ENCODE measurements at regions of chr22 and their contacts with region 1.

Region 1: GRCh38 chr22:36339171-36340065 is 48.3 kb downstream of the MYH9 start:
- DNase-seq: peak; percentile 52
- H3K4me3 ChIP-seq: no peak overlapping the region
- H3K27ac ChIP-seq: peak overlapping the region; percentile 47
- H3K4me1 ChIP-seq: peaks cover 95% of the 10 kb centered on the region
- H3K27me3 ChIP-seq: no peaks in the 10 kb centered on the region
- CTCF ChIP-seq: no peak
- POLR2A ChIP-seq: no peak

Region 2: GRCh38 chr22:36211237-36211861 is 128.1 kb before region 1 on chr22:
- CTCF ChIA-PET with region 1: no interaction called
- POLR2A ChIA-PET with region 1: no interaction called
- dilution Hi-C with region 1: no loop called
- intact Hi-C with region 1: no loop called
- DNase-seq: peak; percentile 42
- H3K4me3 ChIP-seq: no peak overlapping the region
- H3K27ac ChIP-seq: no peak overlapping the region
- H3K4me1 ChIP-seq: no peaks in the 10 kb centered on the region
- H3K27me3 ChIP-seq: peaks cover 31 to 41% of the 10 kb centered on the region in 2 experiments
- CTCF ChIP-seq: no peak
- POLR2A ChIP-seq: no peak

Region 3: DNA sequence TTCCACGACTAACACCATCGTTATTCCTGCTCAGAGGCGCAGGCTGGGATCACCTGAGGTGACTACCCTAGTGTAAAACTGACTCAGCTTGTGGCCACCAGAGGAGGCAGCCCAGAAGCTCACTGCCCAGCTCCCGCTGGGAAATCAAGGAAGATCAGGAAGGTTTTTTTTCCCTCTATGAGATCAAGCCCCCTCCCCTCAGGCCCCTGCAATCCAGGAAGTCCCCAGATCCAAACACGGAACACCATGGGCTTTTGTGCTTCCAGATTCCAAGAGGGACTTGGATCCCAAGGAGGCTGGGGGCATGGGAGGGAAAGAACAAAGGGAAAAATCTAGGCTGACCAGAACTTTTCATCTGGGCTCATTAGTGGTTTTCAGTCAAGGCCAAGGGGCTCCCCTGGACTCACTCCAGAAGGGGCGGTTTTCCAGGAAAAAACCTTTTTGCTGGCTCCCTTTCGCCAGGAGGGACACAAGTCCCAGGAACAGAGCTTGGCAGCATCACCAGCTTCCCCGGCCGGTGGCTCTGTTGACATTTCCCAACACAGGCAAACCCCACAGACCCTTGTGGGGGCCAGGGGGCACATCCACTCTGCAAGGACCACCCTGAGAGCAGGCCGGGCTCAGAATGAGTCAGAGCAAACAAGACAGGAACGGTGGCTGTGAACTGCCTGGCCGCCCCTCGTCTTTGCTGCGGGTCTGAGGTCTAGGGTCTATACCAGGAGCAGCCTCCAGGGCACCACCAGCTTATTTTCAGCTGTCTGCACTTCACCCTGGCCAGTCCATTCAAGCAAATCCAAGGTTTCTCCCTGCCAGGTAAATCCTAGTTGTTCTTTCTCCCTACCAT is 11.6 kb after region 1 on chr22:
- CTCF ChIA-PET with region 1: interaction called, 14 read pairs
- POLR2A ChIA-PET with region 1: interaction called, 5 read pairs
- dilution Hi-C with region 1: no loop called
- intact Hi-C with region 1: loop called (anchors 1 kb)
- DNase-seq: peak; percentile 56
- H3K4me3 ChIP-seq: no peak overlapping the region
- H3K27ac ChIP-seq: peak overlapping the region; percentile 60
- H3K4me1 ChIP-seq: peaks cover 86% of the 10 kb centered on the region
- H3K27me3 ChIP-seq: no peaks in the 10 kb centered on the region
- CTCF ChIP-seq: no peak
- POLR2A ChIP-seq: no peak

Region 4: GRCh38 chr22:36359181-36359996 is 20.0 kb after region 1 on chr22:
- CTCF ChIA-PET with region 1: interaction called, 8 read pairs
- POLR2A ChIA-PET with region 1: interaction called, 11 read pairs
- dilution Hi-C with region 1: no loop called
- intact Hi-C with region 1: no loop called
- DNase-seq: no peak
- H3K4me3 ChIP-seq: no peak overlapping the region
- H3K27ac ChIP-seq: peak overlapping the region; percentile 56
- H3K4me1 ChIP-seq: peaks cover 92% of the 10 kb centered on the region
- H3K27me3 ChIP-seq: no peaks in the 10 kb centered on the region
- CTCF ChIP-seq: no peak
- POLR2A ChIP-seq: no peak

Measured in endothelial cell of umbilical vein (primary cell).